Activated T-helper 2 cell treated with anti-CD3 and anti-CD28 coated beads, Interferon-gamma antibody, Interleukin-2, Interleukin-4, amounts not matched to agents 10 μg/mL and 5 μg/mL and 100 μg/mL, durations not matched to agents 14 hours and 24 hours and 36 hours (primary cell): ENCODE measurements at regions of chr7 and their contacts with region 1.

Region 1: DNA sequence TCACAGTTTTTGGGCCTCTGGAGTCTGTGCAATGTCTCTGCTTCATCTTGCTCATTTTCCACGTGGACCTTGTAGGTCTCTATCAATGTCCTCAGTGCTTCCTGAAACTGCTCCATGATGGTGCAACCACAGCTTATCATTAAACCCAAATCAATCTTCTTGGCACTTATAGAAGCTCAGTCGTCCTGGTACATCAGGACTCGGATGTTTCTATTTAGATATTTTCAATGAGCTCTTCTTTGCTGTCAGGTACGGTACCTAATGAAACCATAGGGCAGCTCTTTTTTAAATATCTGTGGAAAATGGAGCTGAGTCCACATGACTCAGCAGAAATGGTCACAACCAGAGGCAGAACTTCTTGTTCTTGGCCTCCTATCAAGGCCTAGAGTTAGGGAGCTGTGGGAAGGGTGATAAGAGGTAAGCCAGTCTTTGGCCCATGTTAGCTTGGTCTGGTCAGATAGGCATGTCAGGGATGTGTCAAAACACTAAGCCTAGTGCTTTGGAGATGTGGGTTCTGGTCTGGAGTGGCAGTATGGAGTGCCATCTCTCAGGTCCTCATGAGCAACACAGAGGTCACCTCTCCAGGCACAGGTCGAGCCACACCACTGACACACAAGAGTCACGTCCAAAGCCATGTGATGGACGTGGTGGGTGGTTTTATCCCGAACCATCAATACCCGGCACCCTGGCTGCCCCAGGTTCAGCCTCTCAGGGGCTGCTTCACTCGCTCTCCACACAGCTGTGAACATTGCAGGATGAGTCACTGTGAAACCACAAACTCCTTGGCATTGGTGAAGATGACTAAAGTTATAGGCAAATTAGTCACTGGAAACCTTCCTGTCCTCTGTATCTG is 87.0 kb downstream of the TBXAS1 start:
- DNase-seq: peak; percentile 55
- H3K4me3 Mint-ChIP-seq: no peak overlapping the region
- H3K27ac Mint-ChIP-seq: peak overlapping the region; percentile 9
- H3K4me1 Mint-ChIP-seq: peaks cover 19% of the 10 kb centered on the region
- H3K27me3 Mint-ChIP-seq: peaks cover 5% of the 10 kb centered on the region

Region 2: GRCh38 chr7:139645572-139646523 is 270.2 kb before region 1 on chr7:
- intact Hi-C with region 1: loop called (anchors 2 kb)
- DNase-seq: peak; percentile 69
- H3K4me3 Mint-ChIP-seq: no peak overlapping the region
- H3K27ac Mint-ChIP-seq: no peak overlapping the region
- H3K4me1 Mint-ChIP-seq: peaks cover 44% of the 10 kb centered on the region
- H3K27me3 Mint-ChIP-seq: no peaks in the 10 kb centered on the region

Region 3: DNA sequence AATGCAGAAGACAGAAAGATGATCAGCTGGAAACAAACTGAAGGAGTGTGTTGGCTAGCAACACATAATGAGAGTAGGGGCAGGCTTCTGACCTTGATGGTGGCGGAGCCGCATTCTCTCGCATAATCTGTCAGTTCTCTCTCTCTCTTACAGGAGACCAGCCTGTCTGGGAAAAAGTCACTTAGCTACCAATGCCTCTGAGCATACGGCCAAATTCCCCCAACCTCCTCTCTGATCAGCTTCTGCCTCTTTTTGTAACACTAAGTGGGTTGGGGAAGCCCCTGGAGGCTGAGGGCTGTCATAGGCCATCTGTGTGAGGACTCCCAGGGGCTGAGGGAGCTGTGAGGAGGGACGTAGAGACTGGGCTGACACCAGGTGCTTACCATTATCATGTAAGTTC is 242.9 kb before region 1 on chr7:
- intact Hi-C with region 1: loop called (anchors 2 kb)
- DNase-seq: no peak
- H3K4me3 Mint-ChIP-seq: peak overlapping the region; percentile 6
- H3K27ac Mint-ChIP-seq: peak overlapping the region; percentile 73
- H3K4me1 Mint-ChIP-seq: peaks cover 45% of the 10 kb centered on the region
- H3K27me3 Mint-ChIP-seq: no peaks in the 10 kb centered on the region

Region 4: GRCh38 chr7:139680676-139681462 is 235.2 kb before region 1 on chr7:
- intact Hi-C with region 1: loop called (anchors 2 kb)
- DNase-seq: peak; percentile 67
- H3K4me3 Mint-ChIP-seq: peak overlapping the region; percentile 27
- H3K27ac Mint-ChIP-seq: peak overlapping the region; percentile 92
- H3K4me1 Mint-ChIP-seq: peaks cover 61% of the 10 kb centered on the region
- H3K27me3 Mint-ChIP-seq: no peaks in the 10 kb centered on the region

Region 5: GRCh38 chr7:139940866-139941265 is 24.8 kb after region 1 on chr7:
- intact Hi-C with region 1: loop called (anchors 1 kb)
- DNase-seq: no peak
- H3K4me3 Mint-ChIP-seq: no peak overlapping the region
- H3K27ac Mint-ChIP-seq: no peak overlapping the region
- H3K4me1 Mint-ChIP-seq: peaks cover 16% of the 10 kb centered on the region
- H3K27me3 Mint-ChIP-seq: peaks cover 10% of the 10 kb centered on the region

Region 6: DNA sequence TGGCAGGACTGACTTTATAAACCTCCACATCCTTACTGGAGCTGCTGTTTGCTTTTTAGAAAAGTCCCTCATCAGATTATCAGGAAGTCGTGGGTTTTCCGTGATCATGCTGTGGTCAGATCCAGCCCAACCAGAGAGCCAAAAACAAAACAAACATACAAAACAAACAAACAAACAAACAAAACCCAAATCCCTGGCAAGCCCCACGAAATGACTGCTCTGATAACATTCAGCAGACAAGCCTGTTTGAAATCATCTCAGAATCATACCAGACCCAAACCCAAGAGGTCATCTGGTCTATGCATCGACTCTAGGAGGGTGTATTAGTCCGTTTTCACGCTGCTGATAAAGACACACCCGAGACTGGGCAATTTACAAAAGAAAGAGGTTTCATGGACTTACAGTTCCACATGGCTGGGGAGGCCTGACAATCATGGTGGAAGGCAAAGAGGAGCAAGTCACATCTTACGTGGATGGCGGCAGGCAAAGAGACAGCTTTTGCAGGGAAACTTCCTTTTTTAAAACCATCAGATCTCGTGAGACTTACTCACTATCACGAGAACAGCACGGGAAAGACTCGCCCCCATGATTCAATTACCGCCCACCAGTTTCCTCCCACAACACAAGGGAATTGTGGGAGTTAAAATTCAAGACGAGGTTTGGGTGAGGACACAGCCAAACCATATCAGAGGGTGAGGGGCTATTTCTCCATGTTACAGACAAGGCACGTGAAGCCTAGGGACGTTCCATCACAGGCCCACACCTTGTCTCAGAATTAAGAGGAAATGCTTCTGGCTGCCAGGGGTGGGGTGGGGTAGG is 61.0 kb after region 1 on chr7:
- intact Hi-C with region 1: loop called (anchors 1 kb)
- DNase-seq: no peak
- H3K4me3 Mint-ChIP-seq: no peak overlapping the region
- H3K27ac Mint-ChIP-seq: no peak overlapping the region
- H3K4me1 Mint-ChIP-seq: peaks cover 17% of the 10 kb centered on the region
- H3K27me3 Mint-ChIP-seq: peaks cover 7% of the 10 kb centered on the region